ENCODE measurements at regions of chr7 and their contacts with region 1.

Region 1: DNA sequence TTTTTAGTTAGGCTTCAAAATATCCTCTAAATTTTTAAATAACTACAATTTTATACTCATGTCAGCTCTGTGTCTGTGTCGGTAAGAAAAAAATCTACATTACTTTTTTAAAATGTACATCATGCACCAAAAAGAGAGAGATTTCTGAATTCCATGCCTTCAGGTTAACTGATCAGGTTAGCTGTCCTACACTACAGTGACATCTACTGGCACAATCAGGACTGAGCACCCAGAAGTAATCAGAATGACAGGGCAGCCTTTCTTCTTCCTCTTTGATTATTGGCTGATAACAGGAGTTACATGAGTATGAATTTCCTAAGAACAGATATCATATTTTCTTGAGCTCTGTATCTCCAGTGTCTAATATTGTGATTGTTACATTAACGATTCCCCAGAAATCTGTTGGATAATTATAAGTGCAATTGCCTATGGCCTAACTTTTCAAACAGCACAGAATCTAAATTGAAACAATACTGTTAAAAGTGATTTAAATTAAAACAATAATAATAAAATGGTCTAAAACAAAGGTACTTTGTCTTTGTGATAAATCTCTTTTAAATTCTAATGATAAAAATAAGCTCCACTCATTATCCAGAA is 41.8 kb upstream of the HYCC1 start:
- DNase-seq: peak; percentile 71
- ATAC-seq: peak; percentile 99
- H3K4me3 Mint-ChIP-seq: no peak overlapping the region
- H3K27ac Mint-ChIP-seq: no peak overlapping the region
- H3K4me1 Mint-ChIP-seq: peaks cover 2% of the 10 kb centered on the region
- H3K27me3 Mint-ChIP-seq: no peaks in the 10 kb centered on the region

Region 2: GRCh38 chr7:22559829-22560489 is 495.7 kb before region 1 on chr7:
- CTCF ChIA-PET with region 1: interaction called, 47 read pairs
- POLR2A ChIA-PET with region 1: no interaction called
- intact Hi-C with region 1: loop called (anchors 1 kb)
- DNase-seq: peak; percentile 82
- ATAC-seq: peak; percentile 65
- H3K4me3 Mint-ChIP-seq: no peak overlapping the region
- H3K27ac Mint-ChIP-seq: no peak overlapping the region
- H3K4me1 Mint-ChIP-seq: peaks cover 37% of the 10 kb centered on the region
- H3K27me3 Mint-ChIP-seq: peaks cover 16% of the 10 kb centered on the region

Region 3: GRCh38 chr7:22791204-22792158 is 264.2 kb before region 1 on chr7:
- CTCF ChIA-PET with region 1: interaction called, 12 read pairs
- POLR2A ChIA-PET with region 1: no interaction called
- intact Hi-C with region 1: no loop called
- DNase-seq: no peak
- ATAC-seq: no peak
- H3K4me3 Mint-ChIP-seq: no peak overlapping the region
- H3K27ac Mint-ChIP-seq: no peak overlapping the region
- H3K4me1 Mint-ChIP-seq: no peaks in the 10 kb centered on the region
- H3K27me3 Mint-ChIP-seq: no peaks in the 10 kb centered on the region

Region 4: DNA sequence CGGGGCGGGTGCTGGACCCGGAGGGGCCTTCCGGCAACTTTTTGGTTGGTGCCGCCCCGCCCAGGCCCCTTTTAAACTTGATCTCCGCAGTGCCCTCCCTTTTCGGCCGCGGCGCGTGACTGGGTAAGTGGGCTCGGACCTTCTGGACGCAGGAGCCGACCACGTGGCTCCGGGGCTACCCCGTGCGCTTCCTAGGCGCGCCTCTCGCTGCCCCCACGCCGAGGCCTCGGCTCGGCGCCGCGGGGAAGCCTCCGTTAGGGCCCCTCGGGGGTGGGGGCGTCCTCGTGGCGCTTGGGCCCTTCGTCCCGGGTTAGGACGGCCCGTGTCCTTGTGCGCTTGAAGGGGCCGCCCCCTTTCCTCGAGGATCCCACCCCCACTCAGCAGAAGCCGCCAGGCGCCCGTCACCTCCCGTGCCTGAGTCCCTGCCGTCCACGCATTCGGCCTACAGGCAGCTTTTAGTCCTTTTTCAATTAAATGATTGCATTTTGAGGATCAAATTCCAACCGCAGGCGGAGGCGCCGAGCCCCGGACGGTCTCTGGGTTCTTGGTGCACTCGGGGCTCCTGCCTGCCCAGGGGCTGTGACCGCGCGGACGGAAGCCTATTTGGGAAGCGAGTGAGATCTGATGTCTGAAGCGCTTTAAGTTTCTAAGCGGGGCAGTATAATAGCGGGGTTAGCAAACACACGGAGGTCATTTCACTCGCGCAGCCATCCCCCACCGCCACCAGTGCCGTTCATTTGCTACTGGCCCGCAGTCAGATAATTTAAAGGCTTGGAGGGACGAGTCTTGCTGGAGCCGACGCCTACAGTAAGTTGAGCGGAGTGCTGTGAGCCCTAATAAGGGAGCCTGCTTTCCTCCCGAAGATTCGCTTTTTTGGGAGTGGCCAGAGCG is 201.3 kb before region 1 on chr7:
- CTCF ChIA-PET with region 1: interaction called, 28 read pairs
- POLR2A ChIA-PET with region 1: no interaction called
- intact Hi-C with region 1: loop called (anchors 1 kb)
- DNase-seq: peak; percentile 89
- ATAC-seq: peak; percentile 74
- H3K4me3 Mint-ChIP-seq: peak overlapping the region; percentile 92
- H3K27ac Mint-ChIP-seq: peak overlapping the region; percentile 92
- H3K4me1 Mint-ChIP-seq: peaks cover 34% of the 10 kb centered on the region
- H3K27me3 Mint-ChIP-seq: peaks cover 2% of the 10 kb centered on the region

Region 5: GRCh38 chr7:22920672-22921071 is 135.0 kb before region 1 on chr7:
- CTCF ChIA-PET with region 1: no interaction called
- POLR2A ChIA-PET with region 1: no interaction called
- intact Hi-C with region 1: no loop called
- DNase-seq: no peak
- ATAC-seq: no peak
- H3K4me3 Mint-ChIP-seq: no peak overlapping the region
- H3K27ac Mint-ChIP-seq: no peak overlapping the region
- H3K4me1 Mint-ChIP-seq: no peaks in the 10 kb centered on the region
- H3K27me3 Mint-ChIP-seq: no peaks in the 10 kb centered on the region

Region 6: GRCh38 chr7:23020742-23021401 is 34.8 kb before region 1 on chr7:
- CTCF ChIA-PET with region 1: interaction called, 34 read pairs
- POLR2A ChIA-PET with region 1: no interaction called
- intact Hi-C with region 1: no loop called
- DNase-seq: peak; percentile 24
- ATAC-seq: peak; percentile 94
- H3K4me3 Mint-ChIP-seq: peak overlapping the region; percentile 8
- H3K27ac Mint-ChIP-seq: peak overlapping the region; percentile 74
- H3K4me1 Mint-ChIP-seq: peaks cover 37% of the 10 kb centered on the region
- H3K27me3 Mint-ChIP-seq: peaks cover 4% of the 10 kb centered on the region

Region 7: DNA sequence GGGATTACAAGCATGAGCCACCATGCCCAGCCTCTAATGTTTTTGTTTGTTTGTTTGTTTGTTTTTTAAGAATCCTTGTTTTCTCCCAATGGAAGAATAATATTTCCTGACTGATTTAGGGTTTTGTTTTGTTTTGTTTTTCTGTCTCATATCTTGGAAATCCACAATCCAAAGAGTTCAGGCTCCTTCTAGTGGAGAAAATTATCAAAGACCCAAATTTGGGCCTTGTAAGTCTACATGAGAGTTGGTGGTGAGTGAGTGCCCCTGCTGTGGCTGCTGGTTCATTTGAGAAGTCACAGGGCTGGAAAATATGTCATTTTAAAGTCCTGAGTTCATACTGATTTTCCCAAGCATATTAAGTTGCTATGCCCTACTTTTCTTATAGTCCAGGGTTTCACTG is 16.4 kb after region 1 on chr7:
- CTCF ChIA-PET with region 1: interaction called, 11 read pairs
- POLR2A ChIA-PET with region 1: no interaction called
- intact Hi-C with region 1: no loop called
- DNase-seq: no peak
- ATAC-seq: no peak
- H3K4me3 Mint-ChIP-seq: no peak overlapping the region
- H3K27ac Mint-ChIP-seq: no peak overlapping the region
- H3K4me1 Mint-ChIP-seq: no peaks in the 10 kb centered on the region
- H3K27me3 Mint-ChIP-seq: peaks cover 11% of the 10 kb centered on the region

Region 8: DNA sequence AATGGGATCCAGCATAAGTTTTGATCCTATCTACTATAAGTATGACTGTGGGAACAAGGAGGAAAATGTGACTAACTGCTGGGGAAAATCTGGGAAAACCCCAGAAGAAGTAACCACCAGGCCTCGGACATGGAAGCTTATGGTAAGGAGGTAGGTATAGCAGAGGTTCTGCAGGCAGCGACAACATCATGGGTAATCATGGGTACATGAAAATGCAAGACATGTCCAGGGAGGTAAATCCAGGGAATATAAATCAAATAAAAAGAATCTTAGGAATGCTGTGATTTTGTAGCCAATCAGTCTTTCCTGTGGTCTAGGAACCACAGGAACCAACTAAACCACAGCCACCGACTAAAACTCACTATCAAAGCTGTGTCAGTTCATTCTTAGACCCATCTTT is 1060.0 kb after region 1 on chr7:
- CTCF ChIA-PET with region 1: no interaction called
- POLR2A ChIA-PET with region 1: no interaction called
- intact Hi-C with region 1: no loop called
- DNase-seq: no peak
- ATAC-seq: no peak
- H3K4me3 Mint-ChIP-seq: no peak overlapping the region
- H3K27ac Mint-ChIP-seq: no peak overlapping the region
- H3K4me1 Mint-ChIP-seq: no peaks in the 10 kb centered on the region
- H3K27me3 Mint-ChIP-seq: peaks cover 14% of the 10 kb centered on the region

Measured in activated CD4-positive, alpha-beta T cell treated with anti-CD3 and anti-CD28 coated beads for 36 hours (primary cell).